ENCODE measurements at regions of chr21 and their contacts with region 1.

Region 1: GRCh38 chr21:46228345-46229051 is at the start of gene LSS:
- DNase-seq: peak; percentile 99
- ATAC-seq: peak; percentile 94
- H3K4me3 ChIP-seq: peak within 1 kb of the TSS; percentile 13 to 92 (median 87)
- H3K4me3 Mint-ChIP-seq: peak within 1 kb of the TSS; percentile 90
- H3K27ac ChIP-seq: peak within 1 kb of the TSS; percentile 71 to 91
- H3K27ac Mint-ChIP-seq: peak within 1 kb of the TSS; percentile 91
- H3K4me1 ChIP-seq: peaks cover 21 to 22% of the 10 kb centered on the region in 2 donors
- H3K4me1 Mint-ChIP-seq: peaks cover 35% of the 10 kb centered on the region
- H3K27me3 ChIP-seq: no peaks in the 10 kb centered on the region
- H3K27me3 Mint-ChIP-seq: no peaks in the 10 kb centered on the region
- CTCF ChIP-seq: no peak
- total RNA-seq, gene LSS: 58.1 and 68.0 TPM in 2 replicates

Region 2: GRCh38 chr21:46184625-46185555 is 43.6 kb before region 1 on chr21:
- CTCF ChIA-PET with region 1: no interaction called
- POLR2A ChIA-PET with region 1: no interaction called
- intact Hi-C with region 1: loop called (anchors 1 kb)
- DNase-seq: peak; percentile 91
- ATAC-seq: peak; percentile 84
- H3K4me3 ChIP-seq: peak overlapping the region; percentile 36 to 91 (median 76)
- H3K4me3 Mint-ChIP-seq: peak overlapping the region; percentile 92
- H3K27ac ChIP-seq: peak overlapping the region; percentile 59 to 63
- H3K27ac Mint-ChIP-seq: peak overlapping the region; percentile 90
- H3K4me1 ChIP-seq: peaks cover 0 to 16% of the 10 kb centered on the region in 2 donors
- H3K4me1 Mint-ChIP-seq: peaks cover 9% of the 10 kb centered on the region
- H3K27me3 ChIP-seq: no peaks in the 10 kb centered on the region
- H3K27me3 Mint-ChIP-seq: no peaks in the 10 kb centered on the region
- CTCF ChIP-seq: no peak

Region 3: DNA sequence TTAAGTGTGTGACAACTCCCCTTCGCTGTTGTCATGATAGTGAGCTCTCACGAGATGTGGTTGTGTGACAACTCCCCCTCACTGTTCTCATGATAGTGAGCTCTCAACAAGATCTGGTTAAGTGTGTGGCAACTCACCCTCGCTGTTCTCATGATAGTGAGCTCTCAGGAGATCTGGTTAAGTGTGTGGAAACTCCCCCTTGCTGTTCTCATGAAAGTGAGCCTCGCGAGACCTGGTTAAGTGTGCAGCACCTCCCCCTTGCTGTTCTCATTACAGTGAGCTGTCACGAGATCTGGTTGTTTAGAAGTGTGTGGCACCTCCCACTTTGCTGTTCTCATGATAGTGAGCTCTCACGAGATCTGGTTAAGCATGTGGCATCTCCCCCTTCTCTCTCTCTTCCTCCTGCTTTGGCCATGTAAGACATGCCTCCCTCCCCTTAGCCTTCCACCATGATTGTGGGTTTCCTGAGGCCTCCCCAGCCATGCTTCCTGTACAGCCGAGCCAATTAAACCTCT is 25.2 kb after region 1 on chr21:
- CTCF ChIA-PET with region 1: interaction called, 3 read pairs
- POLR2A ChIA-PET with region 1: interaction called, 5 read pairs
- intact Hi-C with region 1: loop called (anchors 2 kb)
- DNase-seq: peak; percentile 76
- ATAC-seq: peak; percentile 77
- H3K4me3 ChIP-seq: peak overlapping the region in 1 of 5 experiments; percentile 26
- H3K4me3 Mint-ChIP-seq: peak overlapping the region; percentile 68
- H3K27ac ChIP-seq: peak overlapping the region; percentile 62 to 87
- H3K27ac Mint-ChIP-seq: peak overlapping the region; percentile 90
- H3K4me1 ChIP-seq: peaks cover 17 to 25% of the 10 kb centered on the region in 2 donors
- H3K4me1 Mint-ChIP-seq: peaks cover 35% of the 10 kb centered on the region
- H3K27me3 ChIP-seq: no peaks in the 10 kb centered on the region
- H3K27me3 Mint-ChIP-seq: no peaks in the 10 kb centered on the region
- CTCF ChIP-seq: no peak

Region 4: GRCh38 chr21:46295996-46296752 is 67.7 kb after region 1 on chr21:
- CTCF ChIA-PET with region 1: no interaction called
- POLR2A ChIA-PET with region 1: no interaction called
- intact Hi-C with region 1: no loop called
- DNase-seq: peak; percentile 64
- ATAC-seq: peak; percentile 89
- H3K4me3 ChIP-seq: peak overlapping the region in 3 of 5 experiments; percentile 18 to 49 (median 29)
- H3K4me3 Mint-ChIP-seq: peak overlapping the region; percentile 85
- H3K27ac ChIP-seq: peak overlapping the region; percentile 34 to 67
- H3K27ac Mint-ChIP-seq: peak overlapping the region; percentile 77
- H3K4me1 ChIP-seq: peaks cover 11 to 17% of the 10 kb centered on the region in 2 donors
- H3K4me1 Mint-ChIP-seq: peaks cover 13% of the 10 kb centered on the region
- H3K27me3 ChIP-seq: peaks cover 0 to 10% (median 3%) of the 10 kb centered on the region in 4 experiments
- H3K27me3 Mint-ChIP-seq: peaks cover 3% of the 10 kb centered on the region
- CTCF ChIP-seq: no peak

Region 5: DNA sequence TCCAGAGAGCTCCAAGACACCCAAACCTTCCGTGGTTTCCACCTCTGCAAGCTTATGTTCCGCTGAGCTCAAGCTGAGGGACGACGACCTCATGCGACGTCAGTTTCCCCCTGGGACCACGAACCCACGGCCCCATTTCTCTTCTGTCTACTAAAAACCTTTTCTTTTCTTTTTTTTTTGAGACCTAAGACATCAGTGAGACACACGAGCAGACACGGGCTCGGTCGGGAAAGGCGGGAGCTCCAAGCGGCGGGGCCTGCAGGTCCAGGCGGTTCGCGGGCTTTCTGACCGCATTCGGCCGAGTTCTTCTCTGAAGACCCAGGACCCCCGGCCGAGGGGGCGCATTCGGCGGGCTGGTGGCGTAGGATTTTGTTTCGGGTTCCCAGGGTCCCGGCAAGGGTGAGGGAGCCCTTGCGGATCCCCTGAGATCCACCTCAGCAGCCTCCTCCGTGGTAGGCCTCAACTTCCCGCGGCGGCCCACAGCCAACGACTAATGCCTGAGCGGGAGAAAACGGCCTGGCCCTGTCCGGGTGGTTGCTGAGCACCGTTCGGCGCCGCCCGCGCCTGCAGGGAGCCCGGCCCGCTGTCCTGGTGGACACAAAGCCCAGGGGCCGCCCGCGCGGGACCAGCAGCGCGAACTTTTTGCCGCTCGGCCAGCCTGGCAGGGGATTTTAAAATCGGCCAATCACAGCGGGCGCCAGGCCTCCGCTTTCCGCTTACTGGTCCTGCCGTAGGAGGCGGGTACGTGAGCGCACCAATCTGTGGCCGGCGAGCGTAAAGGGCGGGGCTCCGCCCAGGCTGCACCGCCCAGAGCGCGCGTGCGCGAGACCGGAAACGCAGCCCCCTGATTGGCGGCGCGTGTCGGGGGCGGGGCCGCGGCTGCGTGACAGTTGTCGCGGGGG is 95.0 kb after region 1 on chr21 and contains the start of gene C21orf58:
- CTCF ChIA-PET with region 1: no interaction called
- POLR2A ChIA-PET with region 1: no interaction called
- intact Hi-C with region 1: loop called (anchors 1 kb)
- DNase-seq: peak; percentile 98
- ATAC-seq: peak; percentile 80
- H3K4me3 ChIP-seq: peak within 1 kb of the TSS; percentile 54 to 100 (median 95)
- H3K4me3 Mint-ChIP-seq: peak within 1 kb of the TSS; percentile 88
- H3K27ac ChIP-seq: peak within 1 kb of the TSS; percentile 95 to 96
- H3K27ac Mint-ChIP-seq: peak within 1 kb of the TSS; percentile 95
- H3K4me1 ChIP-seq: peaks cover 16 to 23% of the 10 kb centered on the region in 2 donors
- H3K4me1 Mint-ChIP-seq: peaks cover 24% of the 10 kb centered on the region
- H3K27me3 ChIP-seq: peaks cover 0 to 3% (median 0%) of the 10 kb centered on the region in 4 experiments
- H3K27me3 Mint-ChIP-seq: no peaks in the 10 kb centered on the region
- CTCF ChIP-seq: no peak
- total RNA-seq, gene C21orf58: 9.3 and 9.5 TPM in 2 replicates

Region 6: GRCh38 chr21:46458315-46459023 is 230.0 kb after region 1 on chr21 and contains the start of gene DIP2A:
- CTCF ChIA-PET with region 1: no interaction called
- POLR2A ChIA-PET with region 1: no interaction called
- intact Hi-C with region 1: loop called (anchors 1 kb)
- DNase-seq: peak; percentile 97
- ATAC-seq: peak; percentile 98
- H3K4me3 ChIP-seq: peak within 1 kb of the TSS; percentile 49 to 95 (median 90)
- H3K4me3 Mint-ChIP-seq: peak within 1 kb of the TSS; percentile 93
- H3K27ac ChIP-seq: peak within 1 kb of the TSS; percentile 79 to 89
- H3K27ac Mint-ChIP-seq: peak within 1 kb of the TSS; percentile 89
- H3K4me1 ChIP-seq: peaks cover 16 to 23% of the 10 kb centered on the region in 2 donors
- H3K4me1 Mint-ChIP-seq: peaks cover 29% of the 10 kb centered on the region
- H3K27me3 ChIP-seq: no peaks in the 10 kb centered on the region
- H3K27me3 Mint-ChIP-seq: no peaks in the 10 kb centered on the region
- CTCF ChIP-seq: no peak
- total RNA-seq, gene DIP2A: 59.0 and 61.9 TPM in 2 replicates